ENCODE measurements at regions of chr5 and their contacts with region 1.

Region 1: DNA sequence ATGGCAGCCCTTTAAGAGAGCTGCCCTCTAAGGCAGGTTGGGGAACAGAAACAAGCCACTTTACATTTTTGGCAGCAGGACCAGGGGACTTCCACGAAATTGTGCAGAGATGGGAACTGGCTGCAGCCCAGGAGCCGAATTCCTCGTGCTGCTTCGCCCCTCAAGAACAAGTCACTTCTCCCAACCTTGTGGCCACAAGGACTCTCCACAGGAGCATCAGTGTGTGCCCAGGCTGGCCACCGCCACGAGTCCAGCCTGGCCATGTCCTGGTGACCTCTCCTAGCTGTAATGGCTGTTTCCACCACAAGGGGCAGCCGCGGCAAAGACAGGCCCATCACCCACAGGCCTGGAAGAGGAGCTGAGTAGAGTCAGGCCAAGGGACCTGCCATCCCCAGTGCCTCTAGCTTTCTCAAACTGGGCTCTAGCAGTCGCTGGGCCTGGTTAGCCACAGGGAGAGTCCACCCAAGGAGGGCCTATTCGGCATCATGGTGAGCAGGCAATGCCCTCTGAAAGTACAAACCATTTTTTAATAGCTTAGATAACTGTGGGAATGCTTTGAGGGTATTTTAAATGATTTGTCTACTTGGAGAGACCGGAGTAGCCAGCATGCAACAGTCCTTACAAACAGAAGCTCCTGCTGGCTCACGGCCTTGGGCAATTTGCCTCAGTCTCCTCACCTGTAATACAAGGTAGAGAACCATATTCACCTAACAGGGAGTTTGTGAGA is 129.0 kb downstream of the COL23A1 start:
- DNase-seq: no peak
- H3K4me3 ChIP-seq: no peak overlapping the region
- H3K27ac ChIP-seq: no peak overlapping the region
- H3K4me1 ChIP-seq: peaks cover 0 to 15% (median 6%) of the 10 kb centered on the region in 4 donors
- H3K27me3 ChIP-seq: no peaks in the 10 kb centered on the region
- CTCF ChIP-seq: peak; percentile 35 to 76 (median 47)
- EP300 ChIP-seq: no peak
- POLR2A ChIP-seq: no peak

Region 2: DNA sequence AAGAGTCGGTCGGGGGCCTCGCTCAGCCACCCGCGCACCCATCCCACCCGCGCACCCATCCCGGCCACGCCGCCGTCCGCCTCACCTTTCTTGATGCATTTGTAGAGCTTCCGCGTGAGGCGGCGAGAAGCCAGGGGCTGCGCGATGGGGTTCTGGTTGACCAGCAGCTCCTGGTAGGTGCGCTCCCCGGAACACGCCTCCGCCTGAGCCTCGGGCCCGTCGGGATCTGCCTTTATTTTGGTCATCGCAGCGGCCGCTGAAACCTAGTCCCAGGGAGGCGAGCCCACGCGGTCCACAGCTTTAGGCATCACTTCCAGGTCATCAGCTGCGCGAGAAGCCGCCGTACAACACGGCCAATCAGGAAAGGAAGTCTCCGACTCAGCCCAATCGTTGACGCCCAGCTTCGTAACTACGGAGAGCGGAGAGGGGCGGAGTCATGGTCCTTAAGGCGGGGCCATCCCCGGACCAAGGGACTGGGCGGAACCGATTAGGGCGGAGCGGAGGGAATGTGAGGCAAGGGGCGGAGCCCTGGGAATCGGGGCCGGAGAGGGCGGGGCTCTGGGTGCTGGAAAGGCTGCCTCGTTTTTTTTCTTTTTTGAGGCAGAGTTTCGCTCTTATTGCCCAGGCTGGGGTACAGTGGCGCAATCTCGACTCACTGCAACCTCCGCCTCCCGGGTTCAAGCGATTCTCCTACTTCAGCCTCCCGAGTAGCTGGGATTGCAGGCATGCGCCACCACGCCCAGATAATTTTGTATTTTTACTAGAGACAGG is 307.4 kb before region 1 on chr5 and contains the start of gene NHP2:
- intact Hi-C with region 1: no loop called
- DNase-seq: peak; percentile 99
- H3K4me3 ChIP-seq: peak within 1 kb of the TSS; percentile 56 to 88 (median 72)
- H3K27ac ChIP-seq: peak within 1 kb of the TSS; percentile 70 to 82 (median 80)
- H3K4me1 ChIP-seq: peaks cover 0 to 28% (median 18%) of the 10 kb centered on the region in 4 donors
- H3K27me3 ChIP-seq: no peaks in the 10 kb centered on the region
- CTCF ChIP-seq: no peak
- EP300 ChIP-seq: peak in 1 of 4 donors; percentile 81
- POLR2A ChIP-seq: peak in 1 of 2 donors; percentile 16
- total RNA-seq, gene NHP2: 77.8 to 231 (median 185) TPM

Region 3: DNA sequence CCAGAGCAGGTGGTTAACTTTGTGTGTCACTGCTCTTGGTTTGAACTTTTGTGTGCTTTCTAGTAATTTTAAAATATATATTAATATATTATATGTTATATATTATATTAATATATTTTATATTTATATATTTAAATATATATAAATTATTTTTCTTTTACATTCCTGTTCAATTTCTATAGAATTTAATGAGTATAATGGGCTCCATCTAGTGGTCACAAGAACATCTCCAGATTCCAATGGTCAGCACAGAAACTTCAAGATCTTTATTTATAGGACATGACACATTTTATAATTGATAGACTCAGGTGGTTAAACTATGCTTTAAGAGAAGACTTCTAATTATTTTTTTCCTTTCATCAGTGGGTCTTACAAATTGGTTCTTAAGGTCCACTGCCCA is 89.9 kb after region 1 on chr5:
- intact Hi-C with region 1: loop called (anchors 5 kb)
- DNase-seq: no peak
- H3K4me3 ChIP-seq: no peak overlapping the region
- H3K27ac ChIP-seq: no peak overlapping the region
- H3K4me1 ChIP-seq: peaks cover 0 to 8% (median 0%) of the 10 kb centered on the region in 4 donors
- H3K27me3 ChIP-seq: peaks cover 0 to 4% (median 0%) of the 10 kb centered on the region in 3 donors
- CTCF ChIP-seq: peak in 2 of 4 experiments; percentile 9 to 37
- EP300 ChIP-seq: no peak
- POLR2A ChIP-seq: no peak